Dendritic cell treated with granulocyte-macrophage colony-stimulating factor and Interleukin-4, amounts not matched to agents 40 ng/mL and 50 ng/mL, for 4 days (primary cell): ENCODE measurements at regions of chr10 and their contacts with region 1.

Region 1: DNA sequence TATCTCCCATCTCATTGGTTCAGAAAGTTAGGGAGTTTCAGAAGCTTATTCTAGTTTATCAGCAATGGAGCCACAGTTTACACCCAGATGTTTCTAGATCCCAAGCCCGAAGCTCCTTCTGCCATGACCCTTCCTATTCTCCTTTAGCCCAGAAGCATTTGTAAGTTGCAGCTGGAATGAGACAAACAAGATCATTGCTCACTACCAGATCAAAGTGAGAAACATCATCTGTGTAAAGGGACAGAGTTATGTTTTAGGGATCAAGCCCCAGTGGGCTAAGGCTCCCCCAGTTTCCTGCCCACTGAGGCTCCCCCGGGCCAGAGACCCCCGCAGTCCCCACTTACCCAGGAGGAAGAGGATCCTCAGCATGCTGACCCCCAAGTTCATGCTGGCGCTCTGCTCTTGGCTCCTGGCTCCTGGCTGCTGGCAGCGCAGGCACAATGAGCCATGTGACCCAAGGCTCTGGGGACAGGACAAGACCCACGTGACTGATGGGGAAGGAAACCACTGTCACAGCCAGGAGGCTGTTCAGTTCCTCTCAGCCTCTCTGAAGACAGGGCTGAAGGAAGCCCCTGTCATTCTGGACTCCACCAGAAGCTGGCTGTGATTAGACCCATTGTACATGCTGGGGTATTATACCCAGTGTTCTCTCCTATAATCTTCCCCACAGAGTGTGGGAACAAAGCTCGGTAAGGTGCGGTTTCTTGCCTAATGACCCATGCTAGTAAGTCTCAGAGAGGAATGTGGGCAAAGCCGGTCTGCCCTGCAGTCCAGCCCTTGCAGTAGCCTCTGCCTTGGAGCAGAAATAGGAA is at the start of gene TMEM273:
- H3K4me3 Mint-ChIP-seq: peak within 1 kb of the TSS; percentile 84
- H3K27ac Mint-ChIP-seq: peak within 1 kb of the TSS; percentile 97
- H3K4me1 Mint-ChIP-seq: peaks cover 81% of the 10 kb centered on the region
- H3K27me3 Mint-ChIP-seq: no peaks in the 10 kb centered on the region

Region 2: GRCh38 chr10:49177391-49178355 is 10.5 kb before region 1 on chr10:
- intact Hi-C with region 1: loop called (anchors 1 kb)
- H3K4me3 Mint-ChIP-seq: peak overlapping the region; percentile 61
- H3K27ac Mint-ChIP-seq: peak overlapping the region; percentile 95
- H3K4me1 Mint-ChIP-seq: peaks cover 96% of the 10 kb centered on the region
- H3K27me3 Mint-ChIP-seq: no peaks in the 10 kb centered on the region

Region 3: GRCh38 chr10:49280001-49280408 is 91.8 kb after region 1 on chr10:
- intact Hi-C with region 1: loop called (anchors 5 kb)
- H3K4me3 Mint-ChIP-seq: no peak overlapping the region
- H3K27ac Mint-ChIP-seq: peak overlapping the region; percentile 3
- H3K4me1 Mint-ChIP-seq: peaks cover 87% of the 10 kb centered on the region
- H3K27me3 Mint-ChIP-seq: no peaks in the 10 kb centered on the region